ENCODE measurements at regions of chr14 and their contacts with region 1.

Region 1: GRCh38 chr14:23320774-23321571 is at the start of gene PABPN1:
- DNase-seq: peak; percentile 96 to 100 (median 99)
- H3K4me3 ChIP-seq: peak within 1 kb of the TSS; percentile 73 to 98
- H3K4me3 Mint-ChIP-seq: peak within 1 kb of the TSS; percentile 91 to 94 (median 92)
- H3K27ac ChIP-seq: peak within 1 kb of the TSS; percentile 89
- H3K27ac Mint-ChIP-seq: peak within 1 kb of the TSS; percentile 90 to 99 (median 98)
- H3K4me1 ChIP-seq: peaks cover 29% of the 10 kb centered on the region
- H3K4me1 Mint-ChIP-seq: peaks cover 18 to 37% (median 27%) of the 10 kb centered on the region in 4 donors
- H3K27me3 ChIP-seq: no peaks in the 10 kb centered on the region
- H3K27me3 Mint-ChIP-seq: peaks cover 0 to 2% of the 10 kb centered on the region in 2 donors
- total RNA-seq, gene PABPN1: 194 to 196 TPM

Region 2: DNA sequence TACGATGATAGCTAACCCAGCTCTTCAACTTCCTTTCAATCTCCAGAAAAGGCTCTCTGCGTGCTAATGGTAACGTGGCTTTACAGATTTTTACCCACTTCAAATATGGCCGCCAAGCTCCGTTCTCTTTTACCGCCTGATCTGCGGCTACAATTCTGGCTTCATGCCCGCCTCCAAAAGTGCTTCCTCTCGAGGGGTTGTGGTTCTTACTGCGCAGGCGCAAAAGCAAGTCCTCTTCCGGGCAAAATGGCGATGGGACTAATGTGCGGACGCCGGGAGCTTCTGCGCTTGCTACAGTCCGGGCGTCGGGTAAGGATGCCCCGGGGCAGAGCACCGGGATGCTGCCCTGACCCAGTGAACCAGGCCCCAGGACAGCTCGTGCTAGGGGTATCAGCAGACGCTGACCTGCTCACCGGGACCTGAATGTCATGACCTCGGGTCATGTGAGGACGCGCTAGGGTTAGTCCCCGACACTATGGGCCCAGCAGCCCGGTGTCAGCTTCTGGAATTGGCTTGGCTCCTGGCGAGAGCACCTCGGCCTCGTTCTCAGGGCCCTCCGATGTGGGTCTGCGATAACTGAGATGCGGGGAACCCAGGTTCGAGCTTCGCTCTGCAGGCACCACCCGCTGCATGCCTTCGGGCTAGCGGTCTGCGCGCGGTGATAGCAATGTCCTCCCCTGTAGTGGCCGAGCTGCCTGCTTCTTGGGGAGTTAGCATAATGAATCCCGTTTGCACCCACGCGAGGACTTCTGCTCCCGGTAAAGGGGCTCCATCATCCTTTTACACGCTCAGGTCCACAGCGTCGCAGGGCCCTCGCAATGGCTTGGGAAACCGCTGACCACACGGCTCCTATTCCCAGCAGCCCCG is 554.3 kb before region 1 on chr14 and contains the start of gene OXA1L:
- CTCF ChIA-PET with region 1: no interaction called
- POLR2A ChIA-PET with region 1: interaction called, 10 read pairs
- intact Hi-C with region 1: no loop called
- DNase-seq: peak; percentile 95 to 98 (median 98)
- H3K4me3 ChIP-seq: peak within 1 kb of the TSS; percentile 62 to 88
- H3K4me3 Mint-ChIP-seq: peak within 1 kb of the TSS; percentile 85 to 96 (median 94)
- H3K27ac ChIP-seq: peak within 1 kb of the TSS; percentile 88
- H3K27ac Mint-ChIP-seq: peak within 1 kb of the TSS; percentile 86 to 100 (median 98)
- H3K4me1 ChIP-seq: peaks cover 24% of the 10 kb centered on the region
- H3K4me1 Mint-ChIP-seq: peaks cover 26 to 39% (median 34%) of the 10 kb centered on the region in 4 donors
- H3K27me3 ChIP-seq: no peaks in the 10 kb centered on the region
- H3K27me3 Mint-ChIP-seq: no peaks in the 10 kb centered on the region
- total RNA-seq, gene OXA1L: 129 to 137 TPM

Region 3: GRCh38 chr14:23258256-23258655 is 62.7 kb before region 1 on chr14:
- CTCF ChIA-PET with region 1: interaction called, 10 read pairs
- POLR2A ChIA-PET with region 1: no interaction called
- intact Hi-C with region 1: no loop called
- DNase-seq: no peak
- H3K4me3 ChIP-seq: no peak overlapping the region
- H3K4me3 Mint-ChIP-seq: no peak overlapping the region
- H3K27ac ChIP-seq: no peak overlapping the region
- H3K27ac Mint-ChIP-seq: peak overlapping the region in 1 of 7 donors; percentile 2
- H3K4me1 ChIP-seq: no peaks in the 10 kb centered on the region
- H3K4me1 Mint-ChIP-seq: no peaks in the 10 kb centered on the region
- H3K27me3 ChIP-seq: no peaks in the 10 kb centered on the region
- H3K27me3 Mint-ChIP-seq: peaks cover 26 to 38% of the 10 kb centered on the region in 2 donors

Region 4: GRCh38 chr14:23301288-23301968 is 19.5 kb before region 1 on chr14:
- CTCF ChIA-PET with region 1: interaction called, 93 read pairs
- POLR2A ChIA-PET with region 1: interaction called, 373 read pairs
- intact Hi-C with region 1: loop called (anchors 1 kb)
- DNase-seq: peak; percentile 95 to 99 (median 98)
- H3K4me3 ChIP-seq: peak overlapping the region; percentile 86 to 90
- H3K4me3 Mint-ChIP-seq: peak overlapping the region; percentile 89 to 100 (median 90)
- H3K27ac ChIP-seq: peak overlapping the region; percentile 87
- H3K27ac Mint-ChIP-seq: peak overlapping the region; percentile 92 to 99 (median 96)
- H3K4me1 ChIP-seq: peaks cover 14% of the 10 kb centered on the region
- H3K4me1 Mint-ChIP-seq: peaks cover 14 to 29% (median 23%) of the 10 kb centered on the region in 4 donors
- H3K27me3 ChIP-seq: no peaks in the 10 kb centered on the region
- H3K27me3 Mint-ChIP-seq: peaks cover 8 to 9% of the 10 kb centered on the region in 2 donors

Region 5: DNA sequence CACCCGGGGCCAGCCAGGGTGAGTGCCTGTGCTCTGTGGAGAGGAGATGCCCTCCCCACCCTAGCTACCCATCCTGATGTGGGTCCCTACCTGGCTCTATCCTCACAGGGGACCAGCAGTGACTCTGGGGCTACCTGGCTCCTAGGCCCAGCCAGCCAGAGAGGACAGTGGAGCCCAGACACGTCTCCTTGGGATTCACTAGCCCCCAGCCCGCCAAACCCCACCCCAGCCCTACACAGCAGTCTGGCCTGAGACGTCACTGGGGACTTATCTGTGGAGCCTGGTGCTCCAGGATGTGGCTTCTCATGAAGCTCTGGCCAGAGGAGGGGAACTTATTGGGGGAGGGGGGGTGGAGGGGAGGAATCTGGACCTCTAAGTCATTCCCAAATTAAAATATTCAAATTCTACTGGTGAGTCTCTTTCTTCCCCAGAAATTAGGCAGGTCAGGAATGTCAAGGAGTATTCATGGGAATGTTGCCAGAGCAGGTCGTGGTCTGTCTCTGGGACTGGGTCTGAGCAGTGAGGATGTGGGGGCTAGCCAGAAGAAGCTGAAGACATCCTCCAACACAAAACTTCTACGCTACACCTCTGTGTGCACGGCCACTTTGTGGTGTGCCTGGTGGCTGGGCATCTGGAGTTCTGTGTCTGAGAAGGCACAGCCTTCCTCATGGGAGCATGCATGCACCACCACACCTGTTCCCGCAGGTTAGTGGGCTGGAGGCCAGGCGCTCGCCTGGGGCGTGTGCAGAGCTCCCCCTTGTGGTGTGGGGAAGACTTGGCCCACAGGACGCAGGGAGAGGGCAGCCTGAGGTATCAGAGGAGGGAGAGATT is 58.6 kb after region 1 on chr14:
- CTCF ChIA-PET with region 1: interaction called, 25 read pairs
- POLR2A ChIA-PET with region 1: interaction called, 3 read pairs
- intact Hi-C with region 1: no loop called
- DNase-seq: peak; percentile 54 to 67 (median 65)
- H3K4me3 ChIP-seq: no peak overlapping the region
- H3K4me3 Mint-ChIP-seq: no peak overlapping the region
- H3K27ac ChIP-seq: no peak overlapping the region
- H3K27ac Mint-ChIP-seq: peak overlapping the region in 1 of 7 donors; percentile 4
- H3K4me1 ChIP-seq: no peaks in the 10 kb centered on the region
- H3K4me1 Mint-ChIP-seq: no peaks in the 10 kb centered on the region
- H3K27me3 ChIP-seq: no peaks in the 10 kb centered on the region
- H3K27me3 Mint-ChIP-seq: peaks cover 5 to 11% of the 10 kb centered on the region in 2 donors

Measured in CD4-positive, alpha-beta memory T cell (primary cell).